GM12878 (cell line): ENCODE measurements at regions of chr1 and their contacts with region 1.

Region 1: DNA sequence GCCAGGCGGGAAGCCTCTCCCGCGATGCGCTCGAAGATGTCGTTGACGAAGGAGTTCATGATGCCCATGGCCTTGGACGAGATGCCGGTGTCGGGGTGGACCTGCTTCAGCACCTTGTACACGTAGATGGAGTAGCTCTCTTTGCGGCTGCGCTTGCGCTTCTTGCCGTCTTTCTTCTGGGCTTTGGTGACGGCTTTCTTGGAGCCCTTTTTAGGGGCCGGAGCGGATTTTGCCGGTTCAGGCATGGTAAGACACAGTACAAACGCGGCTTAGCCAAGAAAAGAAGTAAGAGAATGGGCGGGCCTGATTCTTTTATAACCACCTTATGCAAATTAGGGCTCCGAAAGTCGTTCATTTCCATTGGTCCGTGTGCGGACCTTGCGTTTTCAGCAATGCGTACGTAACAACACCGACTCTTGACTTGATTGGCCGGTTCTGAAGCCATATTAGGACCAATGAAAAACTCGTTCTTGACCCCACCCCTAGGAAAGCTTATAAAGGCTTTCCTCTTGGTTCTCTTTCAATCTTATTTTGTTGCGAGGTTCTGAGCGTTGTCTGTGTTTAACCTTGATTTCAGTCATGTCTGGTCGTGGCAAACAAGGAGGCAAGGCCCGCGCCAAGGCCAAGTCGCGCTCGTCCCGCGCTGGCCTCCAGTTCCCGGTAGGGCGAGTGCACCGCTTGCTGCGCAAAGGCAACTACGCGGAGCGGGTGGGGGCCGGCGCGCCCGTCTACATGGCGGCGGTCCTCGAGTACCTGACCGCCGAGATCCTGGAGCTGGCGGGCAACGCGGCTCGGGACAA is 12.8 kb upstream of the BOLA1 start:
- DNase-seq: peak; percentile 99
- ATAC-seq: peak; percentile 73
- H3K4me3 ChIP-seq: peak overlapping the region; percentile 65
- H3K27ac ChIP-seq: peak overlapping the region; percentile 93
- H3K4me1 ChIP-seq: no peaks in the 10 kb centered on the region
- H3K27me3 ChIP-seq: no peaks in the 10 kb centered on the region
- CTCF ChIP-seq: no peak
- EP300 ChIP-seq: no peak
- POLR2A ChIP-seq: peak; percentile 70
- RAD21 ChIP-seq: no peak

Region 2: DNA sequence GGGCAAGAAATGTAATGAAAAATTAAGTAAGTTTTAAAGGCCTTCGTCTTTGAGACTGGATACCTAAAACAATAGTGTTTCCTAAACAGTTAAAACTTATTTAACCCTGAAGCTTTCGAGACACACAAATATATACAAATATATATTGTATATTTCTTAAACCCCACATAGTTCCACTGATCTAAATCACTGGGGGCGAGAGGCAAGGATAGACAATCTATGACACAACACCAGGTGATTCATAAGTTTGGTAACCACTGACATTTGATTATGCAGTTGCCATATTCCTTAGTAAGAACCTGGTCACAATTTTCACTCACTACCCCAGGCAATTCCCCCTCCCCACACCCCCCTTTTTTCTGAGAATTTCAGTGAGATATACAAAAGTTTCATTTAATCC is 42.5 kb before region 1 on chr1:
- CTCF ChIA-PET with region 1: interaction called, 9 read pairs
- POLR2A ChIA-PET with region 1: interaction called, 57 read pairs
- RAD21 ChIA-PET with region 1: interaction called, 22 read pairs
- SMC1A ChIA-PET with region 1: interaction called, 15 read pairs
- in situ Hi-C with region 1: no loop called
- intact Hi-C with region 1: no loop called
- DNase-seq: no peak
- ATAC-seq: no peak
- H3K4me3 ChIP-seq: peak overlapping the region; percentile 84
- H3K27ac ChIP-seq: peak overlapping the region; percentile 90
- H3K4me1 ChIP-seq: peaks cover 21% of the 10 kb centered on the region
- H3K27me3 ChIP-seq: no peaks in the 10 kb centered on the region
- CTCF ChIP-seq: no peak
- EP300 ChIP-seq: no peak
- POLR2A ChIP-seq: no peak
- RAD21 ChIP-seq: no peak

Region 3: DNA sequence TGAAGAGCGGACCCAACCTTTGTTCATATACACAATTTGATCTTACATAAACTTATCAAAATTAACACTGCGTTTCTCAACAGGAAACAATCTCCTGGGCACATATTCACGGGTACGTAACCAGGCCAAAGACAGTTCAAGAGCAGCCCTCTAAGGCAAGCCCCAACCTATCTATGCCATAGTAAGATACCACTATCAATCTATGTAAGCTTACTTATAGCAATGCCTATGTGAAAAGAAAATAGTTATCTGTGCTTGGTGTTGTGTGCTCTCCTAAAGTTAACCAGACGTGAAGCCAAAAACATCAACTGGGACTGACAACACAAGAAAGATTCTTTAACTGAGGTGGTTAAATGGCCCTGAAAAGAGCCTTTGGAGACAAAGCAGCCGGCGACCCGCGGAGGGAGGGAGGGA is 36.6 kb before region 1 on chr1:
- CTCF ChIA-PET with region 1: interaction called, 4 read pairs
- POLR2A ChIA-PET with region 1: interaction called, 57 read pairs
- RAD21 ChIA-PET with region 1: interaction called, 22 read pairs
- SMC1A ChIA-PET with region 1: interaction called, 13 read pairs
- in situ Hi-C with region 1: no loop called
- intact Hi-C with region 1: no loop called
- DNase-seq: no peak
- ATAC-seq: no peak
- H3K4me3 ChIP-seq: peak overlapping the region; percentile 80
- H3K27ac ChIP-seq: peak overlapping the region; percentile 80
- H3K4me1 ChIP-seq: peaks cover 21% of the 10 kb centered on the region
- H3K27me3 ChIP-seq: no peaks in the 10 kb centered on the region
- CTCF ChIP-seq: no peak
- EP300 ChIP-seq: no peak
- POLR2A ChIP-seq: no peak
- RAD21 ChIP-seq: no peak

Region 4: GRCh38 chr1:149899460-149900293 is 13.1 kb after region 1 on chr1 and contains the start of gene BOLA1:
- CTCF ChIA-PET with region 1: interaction called, 6 read pairs
- POLR2A ChIA-PET with region 1: interaction called, 14 read pairs
- RAD21 ChIA-PET with region 1: no interaction called
- SMC1A ChIA-PET with region 1: interaction called, 4 read pairs
- in situ Hi-C with region 1: no loop called
- intact Hi-C with region 1: loop called (anchors 1 kb)
- DNase-seq: peak; percentile 67
- ATAC-seq: peak; percentile 100
- H3K4me3 ChIP-seq: peak within 1 kb of the TSS; percentile 76
- H3K27ac ChIP-seq: peak within 1 kb of the TSS; percentile 80
- H3K4me1 ChIP-seq: peaks cover 6% of the 10 kb centered on the region; the same call in 1 of the 2 replicates
- H3K27me3 ChIP-seq: no peaks in the 10 kb centered on the region
- CTCF ChIP-seq: no peak
- EP300 ChIP-seq: no peak
- POLR2A ChIP-seq: peak; percentile 78
- RAD21 ChIP-seq: no peak
- polyA plus RNA-seq, gene BOLA1: 0.74 to 4.3 TPM

Region 5: GRCh38 chr1:149917571-149918144 is 31.1 kb after region 1 on chr1 and contains the start of gene SV2A:
- CTCF ChIA-PET with region 1: no interaction called
- POLR2A ChIA-PET with region 1: no interaction called
- RAD21 ChIA-PET with region 1: no interaction called
- SMC1A ChIA-PET with region 1: no interaction called
- in situ Hi-C with region 1: no loop called
- intact Hi-C with region 1: no loop called
- DNase-seq: no peak
- ATAC-seq: peak; percentile 52
- H3K4me3 ChIP-seq: peak within 1 kb of the TSS; percentile 32; the same call in 1 of the 2 replicates
- H3K27ac ChIP-seq: no peak within 1 kb of the TSS
- H3K4me1 ChIP-seq: peaks cover 10% of the 10 kb centered on the region; the same call in 1 of the 2 replicates
- H3K27me3 ChIP-seq: peaks cover 0 to 3% of the 10 kb centered on the region in 2 experiments; a peak in 2 of 4 replicates
- CTCF ChIP-seq: no peak
- EP300 ChIP-seq: no peak
- POLR2A ChIP-seq: peak; percentile 63
- RAD21 ChIP-seq: no peak
- polyA plus RNA-seq, gene SV2A: 0.89 to 2.3 TPM

Region 6: DNA sequence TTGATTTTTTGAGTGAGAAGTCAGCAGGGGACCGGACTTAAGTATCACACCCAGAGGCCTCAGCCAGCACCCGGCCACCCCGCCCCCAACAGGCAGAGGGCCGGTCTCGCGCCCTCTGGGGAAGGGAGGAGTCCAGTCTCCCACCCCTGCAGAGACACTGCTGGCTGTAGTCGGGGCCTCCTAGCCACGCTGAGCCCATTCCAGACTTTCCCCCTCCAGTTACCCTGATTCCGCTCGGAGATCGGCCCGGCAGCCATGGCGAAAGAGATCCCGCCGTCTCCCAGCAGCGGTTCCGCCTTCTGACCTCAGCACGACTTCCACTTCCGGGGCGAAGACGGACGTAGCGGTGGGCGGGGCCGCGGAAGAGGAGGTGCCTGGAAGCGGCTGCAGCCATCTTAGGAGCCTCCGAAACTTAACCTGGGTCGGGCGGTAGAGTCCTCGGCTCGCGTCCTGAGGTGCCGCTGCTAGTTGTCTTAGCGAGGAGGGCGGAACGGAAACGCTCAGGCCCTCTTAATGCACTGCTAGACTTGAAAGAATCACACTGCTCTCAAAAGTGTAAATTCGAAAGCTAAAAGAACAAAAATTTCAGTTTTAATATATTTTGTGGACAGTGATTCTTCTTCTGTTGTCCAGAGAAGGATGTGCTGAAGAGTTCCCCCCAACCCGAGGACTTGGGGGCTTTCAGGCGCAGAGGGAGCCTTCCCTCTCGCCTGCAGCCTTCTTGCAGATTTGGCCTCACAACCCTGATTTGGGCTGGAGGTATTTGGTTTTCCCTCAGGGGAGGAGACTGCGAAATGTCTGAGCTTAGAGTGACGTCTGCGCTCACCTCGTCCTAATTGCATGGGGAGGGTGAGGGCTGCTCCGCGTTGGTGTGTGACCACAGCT is 41.1 kb after region 1 on chr1 and contains the start of gene SF3B4:
- CTCF ChIA-PET with region 1: interaction called, 7 read pairs
- POLR2A ChIA-PET with region 1: interaction called, 31 read pairs
- RAD21 ChIA-PET with region 1: interaction called, 10 read pairs
- SMC1A ChIA-PET with region 1: interaction called, 10 read pairs
- in situ Hi-C with region 1: no loop called
- intact Hi-C with region 1: no loop called
- DNase-seq: peak; percentile 72
- ATAC-seq: peak; percentile 98
- H3K4me3 ChIP-seq: peak within 1 kb of the TSS; percentile 99
- H3K27ac ChIP-seq: peak within 1 kb of the TSS; percentile 92
- H3K4me1 ChIP-seq: peaks cover 10% of the 10 kb centered on the region
- H3K27me3 ChIP-seq: no peaks in the 10 kb centered on the region
- CTCF ChIP-seq: 0 out of 6 replicates have a peak, but pooled peaks of 1 of the 3 experiments have one; percentile 12
- EP300 ChIP-seq: no peak
- POLR2A ChIP-seq: peak; percentile 95
- RAD21 ChIP-seq: no peak
- polyA plus RNA-seq, gene SF3B4: 1.9 to 6.9 TPM

Region 7: DNA sequence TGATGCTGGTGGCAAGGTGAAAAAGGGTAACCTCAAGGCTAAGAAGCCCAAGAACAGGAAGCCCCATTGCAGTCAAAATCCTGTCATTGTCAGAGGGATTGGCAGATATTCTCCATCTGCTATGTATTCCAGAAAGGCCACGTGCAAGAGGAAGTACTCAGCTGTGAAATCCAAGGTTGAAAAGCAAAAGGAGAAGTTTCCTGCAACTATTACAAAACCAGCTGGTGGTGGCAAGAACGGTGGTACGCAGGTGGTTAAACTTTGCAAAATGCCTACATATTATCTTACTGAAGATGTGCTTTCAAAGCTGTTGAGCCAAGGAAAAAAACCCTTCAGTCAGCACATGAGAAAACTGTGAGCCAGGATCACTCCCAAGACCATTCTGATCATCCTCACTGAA is 167.3 kb after region 1 on chr1:
- CTCF ChIA-PET with region 1: interaction called, 12 read pairs
- POLR2A ChIA-PET with region 1: no interaction called
- RAD21 ChIA-PET with region 1: interaction called, 6 read pairs
- SMC1A ChIA-PET with region 1: interaction called, 10 read pairs
- in situ Hi-C with region 1: no loop called
- intact Hi-C with region 1: loop called (anchors 1 kb)
- DNase-seq: no peak
- ATAC-seq: no peak
- H3K4me3 ChIP-seq: no peak overlapping the region
- H3K27ac ChIP-seq: no peak overlapping the region
- H3K4me1 ChIP-seq: peaks cover 4% of the 10 kb centered on the region
- H3K27me3 ChIP-seq: no peaks in the 10 kb centered on the region
- CTCF ChIP-seq: no peak
- EP300 ChIP-seq: no peak
- POLR2A ChIP-seq: no peak
- RAD21 ChIP-seq: no peak

Region 8: DNA sequence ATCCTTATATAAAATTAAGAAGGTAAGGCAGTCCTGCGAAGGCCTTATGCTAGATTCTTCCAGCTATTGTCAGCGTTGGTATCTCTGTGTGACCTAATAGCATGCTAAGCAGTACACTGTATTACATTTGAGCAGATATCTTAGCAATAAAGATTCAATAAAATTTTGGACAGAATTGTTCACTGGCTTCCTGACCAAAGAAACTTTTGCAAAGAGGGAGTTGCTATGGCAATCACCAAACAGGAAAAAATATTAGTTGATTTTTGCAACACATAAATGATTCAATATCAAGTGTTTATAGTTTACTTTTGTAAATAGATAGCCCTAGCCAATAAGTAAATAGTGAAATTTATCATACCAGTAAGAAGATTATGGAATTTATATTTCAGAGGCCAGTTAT is 232.1 kb after region 1 on chr1:
- CTCF ChIA-PET with region 1: no interaction called
- POLR2A ChIA-PET with region 1: no interaction called
- RAD21 ChIA-PET with region 1: no interaction called
- SMC1A ChIA-PET with region 1: no interaction called
- in situ Hi-C with region 1: no loop called
- intact Hi-C with region 1: no loop called
- DNase-seq: no peak
- ATAC-seq: no peak
- H3K4me3 ChIP-seq: no peak overlapping the region
- H3K27ac ChIP-seq: no peak overlapping the region
- H3K4me1 ChIP-seq: no peaks in the 10 kb centered on the region
- H3K27me3 ChIP-seq: no peaks in the 10 kb centered on the region
- CTCF ChIP-seq: no peak
- EP300 ChIP-seq: no peak
- POLR2A ChIP-seq: no peak
- RAD21 ChIP-seq: no peak